ENCODE measurements at regions of chr18 and their contacts with region 1.

Region 1: GRCh38 chr18:45974088-45974536 is 7.0 kb upstream of the EPG5 start:
- DNase-seq: peak; percentile 71
- H3K4me3 ChIP-seq: no peak overlapping the region
- H3K27ac ChIP-seq: no peak overlapping the region
- H3K4me1 ChIP-seq: no peaks in the 10 kb centered on the region
- H3K27me3 ChIP-seq: no peaks in the 10 kb centered on the region
- CTCF ChIP-seq: peak; percentile 54 to 65
- POLR2A ChIP-seq: no peak

Region 2: DNA sequence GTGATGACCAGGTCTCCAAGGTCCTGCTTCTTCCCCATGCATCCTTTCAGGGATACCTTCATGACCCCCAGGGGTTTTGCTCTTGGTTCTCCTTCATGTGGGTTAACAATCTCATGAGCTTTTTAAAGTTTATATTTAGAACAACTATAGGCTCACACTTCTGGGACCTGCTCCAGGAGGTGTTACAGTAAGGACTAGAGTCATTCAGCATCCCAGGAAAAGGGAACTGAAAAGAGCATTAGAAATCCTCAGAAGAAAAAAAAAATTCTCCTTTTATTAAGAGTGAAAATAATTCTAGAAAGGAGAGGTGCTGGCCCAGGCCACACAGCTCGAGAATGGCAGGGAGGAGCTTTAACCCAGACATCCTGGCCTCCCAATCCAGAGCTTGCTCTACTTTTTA is 1227.0 kb before region 1 on chr18:
- CTCF ChIA-PET with region 1: no interaction called
- POLR2A ChIA-PET with region 1: no interaction called
- dilution Hi-C with region 1: no loop called
- intact Hi-C with region 1: no loop called
- DNase-seq: no peak
- H3K4me3 ChIP-seq: no peak overlapping the region
- H3K27ac ChIP-seq: no peak overlapping the region
- H3K4me1 ChIP-seq: no peaks in the 10 kb centered on the region
- H3K27me3 ChIP-seq: no peaks in the 10 kb centered on the region
- CTCF ChIP-seq: no peak
- POLR2A ChIP-seq: no peak

Region 3: GRCh38 chr18:45621061-45621511 is 353.0 kb before region 1 on chr18:
- CTCF ChIA-PET with region 1: interaction called, 5 read pairs
- POLR2A ChIA-PET with region 1: no interaction called
- dilution Hi-C with region 1: no loop called
- intact Hi-C with region 1: loop called (anchors 1 kb)
- DNase-seq: peak; percentile 41
- H3K4me3 ChIP-seq: no peak overlapping the region
- H3K27ac ChIP-seq: no peak overlapping the region
- H3K4me1 ChIP-seq: no peaks in the 10 kb centered on the region
- H3K27me3 ChIP-seq: peaks cover 2% of the 10 kb centered on the region in 2 experiments
- CTCF ChIP-seq: peak; percentile 81 to 89
- POLR2A ChIP-seq: no peak

Region 4: DNA sequence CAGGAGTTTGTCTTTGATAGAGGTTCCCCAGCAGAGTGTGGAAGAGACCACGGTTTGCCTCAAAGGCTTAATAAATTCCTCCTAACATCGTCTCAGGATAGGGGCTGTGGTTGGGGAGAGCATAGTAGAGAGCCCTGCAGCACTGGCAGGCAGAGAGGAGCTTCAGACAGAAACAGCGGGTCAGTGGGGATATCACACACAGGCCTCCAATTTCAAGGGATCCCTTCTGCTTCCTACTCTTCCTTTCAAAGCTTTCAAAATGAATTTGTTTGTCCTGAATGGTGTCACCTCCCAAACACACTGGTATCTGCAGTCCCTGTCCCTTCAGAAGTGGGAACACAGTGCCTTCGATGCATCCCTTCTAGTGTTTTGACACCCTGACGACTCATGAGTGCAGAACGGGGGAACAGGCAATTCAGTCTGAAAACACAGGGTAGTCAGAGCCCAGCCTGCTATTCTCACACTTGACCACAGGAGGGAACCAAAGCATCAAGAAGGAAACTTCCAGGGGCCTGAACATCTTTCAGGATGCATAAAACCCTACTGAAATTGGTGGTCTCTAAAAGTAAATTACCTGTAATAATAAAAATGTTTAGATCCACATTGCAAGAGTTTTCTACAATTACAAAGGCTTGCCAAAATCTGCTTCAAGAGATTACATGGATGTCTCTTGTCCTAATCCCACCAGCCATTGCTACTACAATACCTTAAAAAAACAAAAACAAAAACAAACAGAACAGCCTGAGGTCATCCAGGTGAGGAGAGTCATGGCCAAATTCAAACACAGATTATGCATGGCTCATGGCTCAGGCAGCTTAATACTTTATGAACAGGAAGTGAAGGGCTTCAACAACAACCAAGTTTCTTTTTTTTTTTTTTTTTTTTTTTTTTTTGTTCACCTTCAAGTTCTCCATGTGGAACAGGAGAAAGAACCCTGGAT is 309.0 kb before region 1 on chr18:
- CTCF ChIA-PET with region 1: interaction called, 26 read pairs
- POLR2A ChIA-PET with region 1: no interaction called
- dilution Hi-C with region 1: no loop called
- intact Hi-C with region 1: loop called (anchors 1 kb)
- DNase-seq: peak; percentile 65
- H3K4me3 ChIP-seq: no peak overlapping the region
- H3K27ac ChIP-seq: no peak overlapping the region
- H3K4me1 ChIP-seq: peaks cover 5% of the 10 kb centered on the region
- H3K27me3 ChIP-seq: no peaks in the 10 kb centered on the region
- CTCF ChIP-seq: peak; percentile 75 to 78
- POLR2A ChIP-seq: no peak

Region 5: DNA sequence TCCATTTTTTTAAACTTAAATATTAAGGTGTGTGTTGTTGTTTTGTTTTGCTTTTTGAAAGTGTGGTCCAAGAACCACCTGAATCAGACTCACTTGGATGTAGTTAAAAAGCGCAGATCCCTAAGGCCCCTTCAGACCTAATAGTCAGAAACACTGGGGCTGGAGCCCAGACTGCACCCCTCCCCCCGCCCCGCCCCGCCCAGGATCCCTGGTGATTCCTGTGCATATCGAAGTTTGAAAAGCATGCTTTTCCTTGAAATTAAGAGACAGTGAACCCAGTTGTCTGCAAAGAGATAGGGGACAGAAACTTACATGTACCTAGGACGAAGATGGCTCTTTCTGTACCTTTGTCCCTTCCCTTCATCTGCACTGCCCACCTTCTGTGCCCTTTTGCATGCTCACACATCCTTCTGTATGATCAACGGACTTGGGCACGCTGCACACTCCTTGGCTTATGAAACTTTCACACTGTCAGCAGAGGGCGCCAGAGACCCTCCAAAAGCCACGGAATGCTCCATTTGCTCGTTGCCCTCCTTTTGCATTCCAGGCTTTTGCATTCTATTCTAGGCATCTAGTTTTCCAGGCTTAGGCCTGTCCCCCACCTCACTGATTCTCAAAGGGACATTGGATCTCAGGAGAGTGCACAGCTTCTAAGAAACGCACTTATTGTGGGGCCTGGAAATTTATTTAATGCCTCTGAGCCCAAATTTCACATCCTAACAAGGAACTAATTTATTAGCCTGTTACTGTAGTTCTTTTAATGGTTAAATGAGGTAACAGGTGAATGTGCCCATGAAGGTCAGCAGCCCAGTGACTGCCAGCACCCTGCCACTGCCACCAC is 282.9 kb before region 1 on chr18:
- CTCF ChIA-PET with region 1: interaction called, 5 read pairs
- POLR2A ChIA-PET with region 1: no interaction called
- dilution Hi-C with region 1: no loop called
- intact Hi-C with region 1: loop called (anchors 1 kb)
- DNase-seq: peak; percentile 71
- H3K4me3 ChIP-seq: no peak overlapping the region
- H3K27ac ChIP-seq: no peak overlapping the region
- H3K4me1 ChIP-seq: no peaks in the 10 kb centered on the region
- H3K27me3 ChIP-seq: peaks cover 4% of the 10 kb centered on the region in 2 experiments
- CTCF ChIP-seq: peak; percentile 71 to 85
- POLR2A ChIP-seq: no peak

Region 6: DNA sequence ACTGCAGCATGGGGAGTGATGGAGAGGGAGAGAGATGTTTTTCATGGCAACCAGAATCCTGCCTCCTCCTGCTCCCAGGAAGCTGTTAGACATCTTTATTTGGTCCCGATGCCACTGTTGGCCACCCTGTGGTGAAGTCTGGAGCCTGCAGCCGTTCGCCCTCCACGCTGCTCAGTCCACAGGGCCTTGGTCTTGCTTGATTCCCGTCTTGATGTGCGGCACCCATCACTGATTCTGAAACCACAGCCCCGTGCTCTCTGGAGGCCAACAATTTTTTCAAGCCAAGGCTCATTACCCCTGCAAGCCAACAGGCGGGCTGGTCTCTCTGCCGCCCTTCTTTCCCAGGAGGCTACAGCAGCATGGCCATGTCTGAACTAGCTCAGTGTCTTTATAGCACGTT is 124.1 kb before region 1 on chr18:
- CTCF ChIA-PET with region 1: no interaction called
- POLR2A ChIA-PET with region 1: no interaction called
- dilution Hi-C with region 1: no loop called
- intact Hi-C with region 1: no loop called
- DNase-seq: no peak
- H3K4me3 ChIP-seq: no peak overlapping the region
- H3K27ac ChIP-seq: no peak overlapping the region
- H3K4me1 ChIP-seq: no peaks in the 10 kb centered on the region
- H3K27me3 ChIP-seq: no peaks in the 10 kb centered on the region
- CTCF ChIP-seq: peak; percentile 8 to 20
- POLR2A ChIP-seq: no peak

Region 7: GRCh38 chr18:45910405-45911023 is 63.6 kb before region 1 on chr18:
- CTCF ChIA-PET with region 1: interaction called, 3 read pairs
- POLR2A ChIA-PET with region 1: no interaction called
- dilution Hi-C with region 1: no loop called
- intact Hi-C with region 1: loop called (anchors 2 kb)
- DNase-seq: peak; percentile 61
- H3K4me3 ChIP-seq: no peak overlapping the region
- H3K27ac ChIP-seq: no peak overlapping the region
- H3K4me1 ChIP-seq: no peaks in the 10 kb centered on the region
- H3K27me3 ChIP-seq: no peaks in the 10 kb centered on the region
- CTCF ChIP-seq: peak; percentile 77 to 87
- POLR2A ChIP-seq: no peak

Region 8: DNA sequence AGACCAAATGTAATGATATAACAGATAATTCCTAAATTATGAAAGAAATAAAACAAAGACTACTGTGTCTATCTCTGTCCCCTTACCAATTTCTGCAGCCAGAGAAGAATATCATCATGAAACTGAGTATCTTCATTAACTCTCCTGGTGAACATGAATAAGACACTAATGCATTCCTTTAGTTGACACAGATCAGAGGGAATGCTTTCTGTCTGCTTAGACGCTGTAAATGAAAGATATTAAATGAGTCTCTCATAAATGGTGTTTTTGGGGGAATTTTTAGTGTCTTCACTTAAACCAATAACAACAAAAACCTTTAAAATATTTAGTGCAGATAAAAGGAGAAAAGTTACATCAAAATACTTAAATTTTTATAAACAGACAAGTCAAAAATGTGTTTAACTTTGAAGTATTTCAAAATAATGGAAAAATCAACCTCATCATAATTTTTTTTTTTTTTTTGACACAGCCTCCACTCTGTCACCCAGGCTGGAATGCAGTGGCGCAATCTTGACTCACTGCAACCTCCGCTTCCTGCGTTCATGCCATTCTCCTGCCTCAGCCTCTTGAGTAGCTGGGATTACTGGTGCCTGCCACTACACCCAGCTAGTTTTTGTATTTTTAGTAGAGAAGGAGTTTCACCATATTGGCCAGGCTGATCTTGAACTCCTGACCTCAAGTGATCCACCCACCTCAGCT is 22.9 kb before region 1 on chr18:
- CTCF ChIA-PET with region 1: interaction called, 5 read pairs
- POLR2A ChIA-PET with region 1: no interaction called
- dilution Hi-C with region 1: no loop called
- intact Hi-C with region 1: loop called (anchors 2 kb)
- DNase-seq: peak; percentile 24
- H3K4me3 ChIP-seq: no peak overlapping the region
- H3K27ac ChIP-seq: peak overlapping the region; percentile 35
- H3K4me1 ChIP-seq: peaks cover 11% of the 10 kb centered on the region
- H3K27me3 ChIP-seq: no peaks in the 10 kb centered on the region
- CTCF ChIP-seq: no peak
- POLR2A ChIP-seq: no peak

Measured in endothelial cell of umbilical vein (primary cell).